ENCODE measurements at regions of chr11 and their contacts with region 1.

Region 1: GRCh38 chr11:105202844-105203548 is 63.4 kb upstream of the CARD18 start:
- DNase-seq: peak; percentile 70
- ATAC-seq: peak; percentile 74
- H3K4me3 ChIP-seq: no peak overlapping the region
- H3K27ac ChIP-seq: peak overlapping the region; percentile 1; the same call in 1 of the 2 replicates
- H3K4me1 ChIP-seq: peaks cover 40% of the 10 kb centered on the region
- H3K27me3 ChIP-seq: no peaks in the 10 kb centered on the region
- CTCF ChIP-seq: no peak

Region 2: GRCh38 chr11:104609311-104610085 is 593.5 kb before region 1 on chr11:
- CTCF ChIA-PET with region 1: no interaction called
- POLR2A ChIA-PET with region 1: no interaction called
- intact Hi-C with region 1: loop called (anchors 5 kb)
- DNase-seq: peak; percentile 75
- ATAC-seq: peak; percentile 98
- H3K4me3 ChIP-seq: no peak overlapping the region
- H3K27ac ChIP-seq: no peak overlapping the region
- H3K4me1 ChIP-seq: no peaks in the 10 kb centered on the region
- H3K27me3 ChIP-seq: no peaks in the 10 kb centered on the region
- CTCF ChIP-seq: peak; percentile 93

Region 3: DNA sequence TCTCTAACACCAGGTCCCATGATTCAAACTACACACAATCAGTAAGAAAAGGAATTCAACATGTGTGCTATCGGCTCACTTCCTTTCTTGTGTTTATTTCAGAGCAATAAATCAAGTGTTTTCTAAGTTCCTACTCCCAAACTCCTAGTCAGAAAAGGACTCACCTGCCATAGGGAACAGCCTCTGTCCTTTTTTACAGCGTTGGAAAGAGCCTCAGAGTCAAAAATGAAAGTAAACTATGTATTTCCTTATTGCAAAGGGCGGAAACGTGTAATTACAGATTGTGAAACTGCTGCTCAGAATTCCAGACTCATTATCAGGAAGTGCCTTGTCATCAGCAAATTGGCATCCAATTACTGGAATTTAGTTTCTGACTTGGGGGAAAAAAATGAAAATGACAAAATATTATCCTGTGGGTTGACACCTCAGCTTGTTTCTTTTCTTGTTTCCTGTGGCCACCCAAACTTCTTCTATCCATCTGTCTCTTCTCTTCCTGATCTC is 234.6 kb before region 1 on chr11 and contains the start of gene CASP4:
- CTCF ChIA-PET with region 1: no interaction called
- POLR2A ChIA-PET with region 1: no interaction called
- intact Hi-C with region 1: loop called (anchors 10 kb)
- DNase-seq: peak; percentile 81
- ATAC-seq: peak; percentile 79
- H3K4me3 ChIP-seq: peak within 1 kb of the TSS; percentile 74
- H3K27ac ChIP-seq: peak within 1 kb of the TSS; percentile 71
- H3K4me1 ChIP-seq: peaks cover 25% of the 10 kb centered on the region
- H3K27me3 ChIP-seq: no peaks in the 10 kb centered on the region
- CTCF ChIP-seq: no peak
- total RNA-seq, gene CASP4: 38.5 and 40.9 TPM in 2 replicates

Region 4: GRCh38 chr11:105044921-105045524 is 158.0 kb before region 1 on chr11 and contains the start of gene CARD16:
- CTCF ChIA-PET with region 1: no interaction called
- POLR2A ChIA-PET with region 1: no interaction called
- intact Hi-C with region 1: loop called (anchors 1 kb)
- DNase-seq: no peak
- ATAC-seq: no peak
- H3K4me3 ChIP-seq: no peak within 1 kb of the TSS
- H3K27ac ChIP-seq: no peak within 1 kb of the TSS
- H3K4me1 ChIP-seq: peaks cover 16% of the 10 kb centered on the region
- H3K27me3 ChIP-seq: no peaks in the 10 kb centered on the region
- CTCF ChIP-seq: no peak
- total RNA-seq, gene CARD16: not detected in 2 replicates

Region 5: DNA sequence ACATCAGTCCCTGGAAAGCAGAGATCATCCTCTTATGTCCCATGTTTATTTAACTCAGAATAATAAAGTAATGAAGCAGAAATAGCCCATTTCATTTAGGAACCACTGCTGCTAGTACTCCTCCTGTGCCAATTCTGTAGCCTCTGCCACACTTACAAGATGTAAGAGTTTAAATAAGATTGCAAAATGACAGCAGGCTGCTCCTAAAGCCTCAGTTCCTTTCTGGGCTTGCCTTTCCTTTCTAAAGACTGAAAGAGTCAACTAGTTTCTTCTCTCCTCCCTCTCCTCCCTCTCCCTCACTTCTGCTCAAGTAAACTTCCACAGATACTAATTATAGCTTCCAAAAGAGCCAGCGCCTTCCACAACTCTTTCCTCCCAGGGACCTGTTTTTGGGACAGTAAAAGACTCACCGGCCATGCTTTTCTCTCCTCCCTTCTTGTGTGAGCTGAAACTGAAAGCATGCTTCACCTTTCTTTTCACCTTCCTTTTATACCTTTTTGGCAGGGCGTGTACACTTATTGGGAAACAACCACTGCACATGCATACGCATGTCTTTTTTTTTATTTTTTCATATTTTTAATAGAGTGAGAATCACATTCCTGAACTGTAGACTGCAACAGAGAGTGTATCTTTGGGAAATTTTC is 131.8 kb before region 1 on chr11:
- CTCF ChIA-PET with region 1: no interaction called
- POLR2A ChIA-PET with region 1: no interaction called
- intact Hi-C with region 1: no loop called
- DNase-seq: no peak
- ATAC-seq: no peak
- H3K4me3 ChIP-seq: no peak overlapping the region
- H3K27ac ChIP-seq: no peak overlapping the region
- H3K4me1 ChIP-seq: no peaks in the 10 kb centered on the region
- H3K27me3 ChIP-seq: no peaks in the 10 kb centered on the region
- CTCF ChIP-seq: no peak

Region 6: GRCh38 chr11:105220121-105220520 is 17.1 kb after region 1 on chr11:
- CTCF ChIA-PET with region 1: no interaction called
- POLR2A ChIA-PET with region 1: no interaction called
- intact Hi-C with region 1: no loop called
- DNase-seq: no peak
- ATAC-seq: no peak
- H3K4me3 ChIP-seq: no peak overlapping the region
- H3K27ac ChIP-seq: no peak overlapping the region
- H3K4me1 ChIP-seq: no peaks in the 10 kb centered on the region
- H3K27me3 ChIP-seq: no peaks in the 10 kb centered on the region
- CTCF ChIP-seq: no peak

Region 7: DNA sequence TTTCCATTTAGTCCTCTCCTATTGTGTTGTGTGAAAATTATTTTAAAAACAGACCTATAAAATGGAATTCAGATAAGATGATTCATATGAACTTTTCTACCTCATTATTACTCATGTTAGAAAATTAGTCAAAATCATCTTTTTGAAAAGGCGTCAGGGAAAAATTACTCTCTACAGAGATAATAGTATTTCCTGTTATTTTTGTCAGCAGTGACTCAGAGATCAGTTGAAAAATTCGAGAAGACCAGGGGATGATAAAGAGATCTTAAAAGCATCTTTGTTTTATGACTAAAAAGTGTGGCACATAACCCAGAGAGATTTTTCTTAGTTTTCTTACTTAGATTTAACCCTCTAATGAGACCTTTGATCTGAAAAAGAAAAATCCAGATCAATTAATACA is 94.5 kb after region 1 on chr11:
- CTCF ChIA-PET with region 1: no interaction called
- POLR2A ChIA-PET with region 1: no interaction called
- intact Hi-C with region 1: loop called (anchors 1 kb)
- DNase-seq: peak; percentile 57
- ATAC-seq: peak; percentile 60
- H3K4me3 ChIP-seq: no peak overlapping the region
- H3K27ac ChIP-seq: no peak overlapping the region
- H3K4me1 ChIP-seq: peaks cover 19% of the 10 kb centered on the region
- H3K27me3 ChIP-seq: no peaks in the 10 kb centered on the region
- CTCF ChIP-seq: no peak

Region 8: DNA sequence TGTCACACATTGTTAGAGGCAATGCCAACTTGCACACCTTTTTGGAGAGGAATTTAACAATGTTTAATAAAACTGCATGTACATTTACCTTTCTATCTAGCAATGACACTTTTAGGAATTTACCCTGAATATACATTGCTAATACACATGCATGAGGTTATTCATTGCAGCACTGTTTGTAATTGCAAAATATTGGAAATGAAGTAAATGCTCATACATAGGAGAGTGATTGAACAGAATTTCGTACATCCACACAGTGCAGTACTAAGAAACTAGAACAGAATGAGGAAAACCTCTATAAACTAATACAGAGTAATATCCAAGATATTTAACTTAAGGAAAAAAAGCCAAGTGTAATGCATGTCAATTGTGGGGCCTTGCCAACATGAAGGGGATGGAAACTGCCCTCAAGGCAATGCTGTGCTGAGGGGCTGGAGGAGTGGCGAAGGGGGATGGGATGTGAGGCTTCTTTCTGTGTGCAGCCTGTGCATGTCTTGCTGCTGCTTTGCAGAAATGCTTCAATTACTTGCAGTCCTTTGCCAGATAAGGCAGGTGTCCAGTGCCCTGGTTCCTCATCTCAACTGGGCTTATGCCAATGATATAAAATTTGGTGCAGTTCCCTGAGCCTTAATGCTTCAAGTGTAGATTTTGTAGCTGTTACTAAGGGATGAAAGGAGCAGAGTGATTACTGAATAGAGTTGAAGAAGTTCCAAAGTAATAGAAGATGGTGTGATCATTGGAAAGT is 503.0 kb after region 1 on chr11:
- CTCF ChIA-PET with region 1: no interaction called
- POLR2A ChIA-PET with region 1: no interaction called
- intact Hi-C with region 1: loop called (anchors 10 kb)
- DNase-seq: no peak
- ATAC-seq: no peak
- H3K4me3 ChIP-seq: no peak overlapping the region
- H3K27ac ChIP-seq: no peak overlapping the region
- H3K4me1 ChIP-seq: peaks cover 9% of the 10 kb centered on the region
- H3K27me3 ChIP-seq: no peaks in the 10 kb centered on the region
- CTCF ChIP-seq: no peak

Measured in PC-3 (cell line).